Breast epithelium (tissue), 4 donors: ENCODE measurements at regions of chr22 and their contacts with region 1.

Region 1: DNA sequence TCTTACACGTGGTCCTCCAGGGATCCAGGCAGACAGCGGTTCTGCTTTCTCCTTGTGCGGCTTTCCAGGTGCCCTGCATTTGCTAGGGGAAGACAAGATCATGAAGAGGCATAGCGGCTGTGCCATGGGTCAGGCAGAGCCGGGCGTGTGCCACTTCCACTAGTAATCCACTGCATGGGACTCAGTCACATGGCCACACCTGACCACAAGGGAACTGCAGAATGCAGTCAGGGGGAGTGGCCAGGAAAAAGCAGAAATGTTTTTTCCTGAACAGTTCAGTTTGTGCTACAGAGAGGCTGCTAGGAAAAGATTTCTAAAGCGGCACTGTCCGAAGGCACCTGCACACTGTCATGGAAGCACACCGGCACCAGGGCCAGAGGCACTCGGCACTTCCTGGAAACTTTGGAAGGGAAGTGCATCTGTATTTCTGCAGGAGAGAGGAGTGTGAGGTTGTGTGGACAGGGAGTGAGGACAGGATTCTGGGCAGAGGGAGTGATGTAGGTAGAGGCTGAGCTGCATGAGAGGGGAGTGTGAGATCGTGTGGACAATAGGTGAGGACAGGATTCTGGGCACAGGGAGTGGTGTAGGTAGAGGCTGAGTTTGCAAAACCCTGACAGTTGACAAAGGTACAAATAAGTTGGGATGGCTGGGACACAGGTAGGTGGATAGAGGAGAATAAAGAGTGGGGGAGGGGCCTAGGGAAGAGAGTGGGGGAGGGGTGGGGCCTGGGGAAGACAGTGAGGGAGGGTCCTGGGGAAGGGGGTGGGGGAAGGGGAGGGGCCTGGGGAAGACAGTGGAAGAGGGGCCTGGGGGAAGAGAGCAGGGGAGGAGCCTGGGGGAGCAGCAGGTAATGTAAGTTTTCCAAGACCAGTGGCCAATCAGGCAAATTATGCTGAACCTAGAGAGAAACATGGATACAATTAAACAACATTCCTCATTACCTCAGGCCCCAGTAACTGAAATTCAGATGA is 1436.3 kb downstream of the TBC1D22A start:
- DNase-seq: no peak
- H3K4me3 ChIP-seq: no peak overlapping the region
- H3K27ac ChIP-seq: no peak overlapping the region
- H3K4me1 ChIP-seq: no peaks in the 10 kb centered on the region
- H3K27me3 ChIP-seq: peaks cover 0 to 34% of the 10 kb centered on the region in 2 donors
- CTCF ChIP-seq: no peak
- POLR2A ChIP-seq: no peak

Region 2: DNA sequence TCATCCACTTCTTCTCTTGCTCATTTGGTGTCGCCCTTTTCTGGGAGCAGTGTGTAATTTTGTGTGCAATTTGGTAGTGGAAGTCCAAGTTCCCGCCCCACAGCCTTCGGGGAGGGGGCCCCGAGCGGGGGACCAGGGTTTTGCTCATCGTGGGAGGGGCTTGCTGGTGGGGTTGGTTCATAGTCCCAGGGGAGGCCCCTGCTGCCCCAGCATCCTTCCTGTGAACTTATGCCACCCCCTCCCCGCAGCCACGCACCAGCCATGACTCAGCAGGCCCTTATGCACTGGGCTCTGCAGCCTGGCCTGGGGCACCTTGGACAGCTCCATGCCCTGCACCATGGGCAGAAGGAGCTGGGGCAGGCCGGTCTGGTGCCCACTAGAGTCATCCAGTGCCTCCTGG is 445.3 kb after region 1 on chr22:
- intact Hi-C with region 1: no loop called
- DNase-seq: no peak
- H3K4me3 ChIP-seq: no peak overlapping the region
- H3K27ac ChIP-seq: no peak overlapping the region
- H3K4me1 ChIP-seq: no peaks in the 10 kb centered on the region
- H3K27me3 ChIP-seq: no peaks in the 10 kb centered on the region
- CTCF ChIP-seq: no peak
- POLR2A ChIP-seq: no peak

Region 3: DNA sequence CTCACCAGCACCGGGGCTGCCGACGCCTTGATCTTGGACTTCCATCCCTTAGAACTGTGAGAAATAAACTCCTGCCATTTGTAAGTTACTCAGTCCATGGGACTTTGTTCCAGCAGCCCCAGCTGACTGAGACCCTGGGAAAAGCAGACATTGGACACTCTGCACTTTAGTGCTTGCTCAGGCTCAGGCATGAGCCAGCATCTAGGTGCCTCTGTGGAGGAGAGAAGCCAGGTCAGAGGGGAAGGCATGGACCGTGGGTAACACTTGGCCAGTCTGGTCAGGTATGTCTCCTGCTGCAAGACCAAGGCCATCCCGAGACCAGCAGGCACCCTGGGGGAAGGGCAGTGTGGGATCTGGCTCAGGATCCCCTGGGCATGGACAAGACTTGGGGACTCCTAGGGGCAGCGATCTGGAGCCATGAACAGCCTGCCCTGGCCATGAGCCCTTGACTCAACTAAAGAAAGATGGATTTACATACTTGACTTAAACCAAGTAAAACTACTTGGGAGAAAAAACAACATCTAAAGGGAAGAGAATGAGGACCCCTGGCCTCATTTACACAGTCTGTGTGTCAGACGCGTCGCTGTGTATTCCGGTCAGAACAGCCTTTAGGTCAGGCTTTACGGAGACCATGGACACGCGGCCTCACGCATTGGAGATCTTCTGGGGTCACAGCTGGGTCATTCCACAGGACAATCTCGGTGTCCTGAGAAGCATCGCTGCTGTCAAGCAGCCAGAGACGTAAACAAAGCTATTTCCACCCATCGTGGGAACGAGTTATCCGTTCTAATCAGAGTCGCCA is 1131.8 kb after region 1 on chr22:
- intact Hi-C with region 1: loop called (anchors 10 kb)
- DNase-seq: peak; percentile 12 to 25
- H3K4me3 ChIP-seq: no peak overlapping the region
- H3K27ac ChIP-seq: no peak overlapping the region
- H3K4me1 ChIP-seq: no peaks in the 10 kb centered on the region
- H3K27me3 ChIP-seq: peaks cover 0 to 53% of the 10 kb centered on the region in 2 donors
- CTCF ChIP-seq: no peak
- POLR2A ChIP-seq: no peak